ENCODE measurements at regions of chr16 and their contacts with region 1.

Region 1: GRCh38 chr16:66880288-66881013 is at the start of gene PDP2:
- DNase-seq: peak; percentile 92 to 97
- H3K4me3 ChIP-seq: peak within 1 kb of the TSS; percentile 71 to 84 (median 80)
- H3K27ac ChIP-seq: peak within 1 kb of the TSS; percentile 64; the same call in 1 of the 2 replicates
- H3K4me1 ChIP-seq: peaks cover 0 to 10% (median 3%) of the 10 kb centered on the region in 4 experiments; a peak in 3 of 7 replicates
- H3K27me3 ChIP-seq: peaks cover 0 to 3% (median 0%) of the 10 kb centered on the region in 4 experiments; a peak in 1 of 7 replicates
- CTCF ChIP-seq: no peak
- EP300 ChIP-seq: no peak
- POLR2A ChIP-seq: peak; percentile 51 to 67
- RAD21 ChIP-seq: no peak
- total RNA-seq, gene PDP2: 36.0 and 36.5 TPM in 2 replicates

Region 2: GRCh38 chr16:66758086-66758485 is 122.4 kb before region 1 on chr16:
- CTCF ChIA-PET with region 1: no interaction called
- POLR2A ChIA-PET with region 1: no interaction called
- DNase-seq: no peak
- H3K4me3 ChIP-seq: no peak overlapping the region
- H3K27ac ChIP-seq: no peak overlapping the region
- H3K4me1 ChIP-seq: no peaks in the 10 kb centered on the region
- H3K27me3 ChIP-seq: peaks cover 0 to under 1% (median 0%) of the 10 kb centered on the region in 4 experiments; a peak in 1 of 7 replicates
- CTCF ChIP-seq: peak in 1 of 3 experiments; percentile 28; a peak in 1 of 4 replicates
- EP300 ChIP-seq: no peak
- POLR2A ChIP-seq: no peak
- RAD21 ChIP-seq: no peak

Region 3: GRCh38 chr16:66894948-66895688 is 14.7 kb after region 1 on chr16:
- CTCF ChIA-PET with region 1: interaction called, 27 read pairs
- POLR2A ChIA-PET with region 1: interaction called, 12 read pairs
- DNase-seq: peak in 1 of 2 experiments; percentile 72
- H3K4me3 ChIP-seq: no peak overlapping the region
- H3K27ac ChIP-seq: no peak overlapping the region
- H3K4me1 ChIP-seq: peaks cover 0 to 3% (median 1%) of the 10 kb centered on the region in 4 experiments; a peak in 3 of 7 replicates
- H3K27me3 ChIP-seq: no peaks in the 10 kb centered on the region; a peak in 1 of 7 replicates
- CTCF ChIP-seq: peak; percentile 85 to 91 (median 91)
- EP300 ChIP-seq: no peak
- POLR2A ChIP-seq: no peak
- RAD21 ChIP-seq: peak; percentile 95 to 96

Region 4: DNA sequence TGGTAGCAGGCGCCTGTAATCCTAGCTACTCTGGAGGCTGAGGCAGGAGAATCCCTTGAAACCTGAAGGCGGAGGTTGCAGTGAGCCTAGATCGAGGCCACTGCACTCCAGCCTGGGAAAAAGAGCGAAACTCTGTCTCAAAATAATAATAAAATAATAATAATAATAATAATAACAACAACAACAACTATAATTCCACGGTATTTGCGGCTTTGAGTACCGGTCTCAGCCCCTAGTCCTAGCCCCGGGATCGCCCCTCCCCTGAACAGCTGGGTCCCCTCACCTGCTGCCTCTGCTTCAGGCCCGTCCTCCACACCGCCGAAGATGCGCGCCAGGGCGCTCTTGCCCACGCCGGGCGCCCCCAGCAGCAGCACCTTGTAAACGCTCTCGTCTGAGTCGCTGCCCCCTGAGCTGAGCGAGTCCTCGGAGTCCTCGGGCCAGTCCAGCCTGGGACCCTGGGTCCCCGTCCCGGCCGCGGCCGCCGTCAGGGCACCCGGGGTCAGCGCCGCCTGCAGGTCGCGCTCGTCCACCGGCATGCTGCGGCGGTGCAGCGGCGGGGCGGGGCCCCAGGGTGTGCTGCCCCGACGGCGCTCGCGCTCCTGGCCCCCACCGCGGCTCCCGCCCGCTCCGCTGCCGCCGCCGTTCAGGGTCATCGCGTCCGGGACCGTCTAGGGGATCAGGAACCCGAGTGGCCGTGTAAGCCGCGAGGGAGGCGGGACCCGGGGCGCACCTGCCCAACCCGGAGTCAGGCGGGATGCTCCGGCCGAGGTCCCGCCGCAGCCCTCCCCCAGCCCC is 44.3 kb after region 1 on chr16:
- CTCF ChIA-PET with region 1: interaction called, 1,009 read pairs
- POLR2A ChIA-PET with region 1: interaction called, 7 read pairs
- DNase-seq: peak in 1 of 2 experiments; percentile 88
- H3K4me3 ChIP-seq: peak overlapping the region; percentile 28 to 67 (median 40)
- H3K27ac ChIP-seq: no peak overlapping the region
- H3K4me1 ChIP-seq: peaks cover 0 to 8% (median under 1%) of the 10 kb centered on the region in 4 experiments; a peak in 4 of 7 replicates
- H3K27me3 ChIP-seq: peaks cover 14 to 45% (median 37%) of the 10 kb centered on the region in 4 experiments; a peak in 6 of 7 replicates
- CTCF ChIP-seq: peak; percentile 66 to 83 (median 82)
- EP300 ChIP-seq: peak in 1 of 2 experiments; percentile 21; a peak in 1 of 3 replicates
- POLR2A ChIP-seq: no peak
- RAD21 ChIP-seq: peak in 1 of 2 experiments; percentile 61; a peak in 3 of 4 replicates

Region 5: GRCh38 chr16:66977341-66978113 is 97.1 kb after region 1 on chr16:
- CTCF ChIA-PET with region 1: no interaction called
- POLR2A ChIA-PET with region 1: no interaction called
- DNase-seq: peak; percentile 56 to 98
- H3K4me3 ChIP-seq: no peak overlapping the region
- H3K27ac ChIP-seq: no peak overlapping the region
- H3K4me1 ChIP-seq: no peaks in the 10 kb centered on the region; a peak in 1 of 7 replicates
- H3K27me3 ChIP-seq: no peaks in the 10 kb centered on the region
- CTCF ChIP-seq: peak; percentile 94 to 98 (median 97)
- EP300 ChIP-seq: no peak
- POLR2A ChIP-seq: no peak
- RAD21 ChIP-seq: peak; percentile 99 to 100